Panc1 (cell line): ENCODE measurements at regions of chr5 and their contacts with region 1.

Region 1: GRCh38 chr5:142339781-142340180 is 15.0 kb upstream of the SPRY4 start:
- DNase-seq: no peak
- ATAC-seq: no peak
- H3K4me3 ChIP-seq: no peak overlapping the region
- H3K27ac ChIP-seq: no peak overlapping the region
- H3K4me1 ChIP-seq: no peaks in the 10 kb centered on the region
- H3K27me3 ChIP-seq: no peaks in the 10 kb centered on the region
- CTCF ChIP-seq: no peak

Region 2: DNA sequence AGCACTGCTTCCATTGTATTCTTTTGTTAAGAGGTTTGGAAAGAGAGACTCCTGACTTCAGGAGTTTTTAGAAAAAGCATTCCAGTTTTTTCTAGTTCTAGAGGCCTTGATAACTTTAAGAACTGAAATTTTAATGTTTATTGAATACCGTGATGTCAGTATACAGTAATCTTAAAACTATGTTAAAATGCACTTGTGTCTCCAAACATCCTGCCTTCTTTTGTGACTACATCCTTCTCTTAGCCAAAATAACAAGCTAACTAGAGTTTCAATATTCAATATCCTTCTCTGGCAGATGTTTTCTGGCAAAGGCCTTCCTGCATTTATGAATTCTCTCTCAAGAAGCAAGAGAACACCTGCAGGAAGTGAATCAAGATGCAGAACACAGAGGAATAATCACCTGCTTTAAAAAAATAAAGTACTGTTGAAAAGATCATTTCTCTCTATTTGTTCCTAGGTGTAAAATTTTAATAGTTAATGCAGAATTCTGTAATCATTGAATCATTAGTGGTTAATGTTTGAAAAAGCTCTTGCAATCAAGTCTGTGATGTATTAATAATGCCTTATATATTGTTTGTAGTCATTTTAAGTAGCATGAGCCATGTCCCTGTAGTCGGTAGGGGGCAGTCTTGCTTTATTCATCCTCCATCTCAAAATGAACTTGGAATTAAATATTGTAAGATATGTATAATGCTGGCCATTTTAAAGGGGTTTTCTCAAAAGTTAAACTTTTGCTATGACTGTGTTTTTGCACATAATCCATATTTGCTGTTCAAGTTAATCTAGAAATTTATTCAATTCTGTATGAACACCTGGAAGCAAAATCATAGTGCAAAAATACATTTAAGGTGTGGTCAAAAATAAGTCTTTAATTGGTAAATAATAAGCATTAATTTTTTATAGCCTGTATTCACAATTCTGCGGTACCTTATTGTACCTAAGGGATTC is 188.1 kb before region 1 on chr5:
- CTCF ChIA-PET with region 1: interaction called, 12 read pairs
- POLR2A ChIA-PET with region 1: no interaction called
- in situ Hi-C with region 1: no loop called
- intact Hi-C with region 1: no loop called
- DNase-seq: peak; percentile 53
- ATAC-seq: peak; percentile 80
- H3K4me3 ChIP-seq: no peak overlapping the region
- H3K27ac ChIP-seq: no peak overlapping the region
- H3K4me1 ChIP-seq: no peaks in the 10 kb centered on the region; the same call in 1 of the 2 replicates
- H3K27me3 ChIP-seq: no peaks in the 10 kb centered on the region
- CTCF ChIP-seq: peak; percentile 82; the same call in 1 of the 2 replicates